ENCODE measurements at regions of chr5 and their contacts with region 1.

Region 1: DNA sequence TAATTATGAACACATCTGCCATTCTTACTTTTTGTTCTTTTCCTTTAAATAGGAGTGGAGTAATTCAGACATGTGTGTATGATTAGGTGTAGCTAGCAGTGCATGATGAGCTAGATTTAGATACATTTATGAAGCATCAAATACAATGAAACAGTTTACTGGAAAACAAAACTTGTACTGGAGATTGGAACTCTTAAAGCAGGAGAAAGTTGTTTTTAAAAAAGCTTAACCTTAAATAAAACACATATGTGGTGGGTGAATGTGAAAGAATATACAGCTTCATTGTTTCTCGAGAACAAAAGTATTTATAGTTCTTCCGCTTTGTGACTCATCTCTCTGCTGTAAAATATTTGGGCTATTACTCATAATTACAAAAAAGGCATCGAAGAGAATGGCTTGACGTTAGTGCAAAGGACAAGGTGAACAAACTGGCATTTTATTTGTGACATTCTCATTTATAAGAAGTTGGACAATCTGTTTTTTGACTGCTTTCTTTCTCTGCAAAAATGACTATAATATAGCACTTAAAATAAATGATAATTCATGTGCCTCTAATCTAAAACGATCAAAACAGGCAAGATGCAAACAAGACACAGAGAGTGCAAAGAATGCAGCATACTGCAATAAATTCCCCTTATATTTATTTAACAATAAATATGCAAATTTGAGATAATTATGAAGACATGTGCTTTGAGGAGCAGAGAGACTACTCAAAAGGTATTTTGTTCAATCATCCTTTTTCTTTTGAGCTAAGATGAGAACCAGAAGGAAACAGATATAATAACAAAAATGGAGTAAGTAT is 478.8 kb downstream of the CETN3 start:
- DNase-seq: peak; percentile 59
- ATAC-seq: peak; percentile 91
- H3K4me3 ChIP-seq: peak overlapping the region; percentile 4; the same call in 1 of the 2 replicates
- H3K27ac ChIP-seq: peak overlapping the region; percentile 70
- H3K4me1 ChIP-seq: peaks cover 12% of the 10 kb centered on the region; the same call in 1 of the 2 replicates
- H3K27me3 ChIP-seq: no peaks in the 10 kb centered on the region
- CTCF ChIP-seq: no peak
- EP300 ChIP-seq: peak; percentile 67 to 71; a peak in 2 of 4 replicates
- POLR2A ChIP-seq: no peak
- RAD21 ChIP-seq: peak; percentile 17; the same call in 1 of the 2 replicates

Region 2: GRCh38 chr5:89830691-89831090 is 100.1 kb before region 1 on chr5:
- CTCF ChIA-PET with region 1: no interaction called
- POLR2A ChIA-PET with region 1: no interaction called
- RAD21 ChIA-PET with region 1: no interaction called
- SMC1A ChIA-PET with region 1: no interaction called
- in situ Hi-C with region 1: no loop called
- intact Hi-C with region 1: no loop called
- DNase-seq: no peak
- ATAC-seq: no peak
- H3K4me3 ChIP-seq: no peak overlapping the region
- H3K27ac ChIP-seq: no peak overlapping the region
- H3K4me1 ChIP-seq: no peaks in the 10 kb centered on the region
- H3K27me3 ChIP-seq: no peaks in the 10 kb centered on the region
- CTCF ChIP-seq: no peak
- EP300 ChIP-seq: no peak
- POLR2A ChIP-seq: no peak
- RAD21 ChIP-seq: no peak

Region 3: GRCh38 chr5:89893546-89893945 is 37.2 kb before region 1 on chr5:
- CTCF ChIA-PET with region 1: no interaction called
- POLR2A ChIA-PET with region 1: no interaction called
- RAD21 ChIA-PET with region 1: no interaction called
- SMC1A ChIA-PET with region 1: no interaction called
- in situ Hi-C with region 1: no loop called
- intact Hi-C with region 1: no loop called
- DNase-seq: no peak
- ATAC-seq: no peak
- H3K4me3 ChIP-seq: no peak overlapping the region
- H3K27ac ChIP-seq: no peak overlapping the region
- H3K4me1 ChIP-seq: no peaks in the 10 kb centered on the region
- H3K27me3 ChIP-seq: no peaks in the 10 kb centered on the region
- CTCF ChIP-seq: no peak
- EP300 ChIP-seq: no peak
- POLR2A ChIP-seq: no peak
- RAD21 ChIP-seq: no peak

Region 4: GRCh38 chr5:90015584-90016018 is 84.8 kb after region 1 on chr5:
- CTCF ChIA-PET with region 1: interaction called, 3 read pairs
- POLR2A ChIA-PET with region 1: no interaction called
- RAD21 ChIA-PET with region 1: interaction called, 4 read pairs
- SMC1A ChIA-PET with region 1: interaction called, 3 read pairs
- in situ Hi-C with region 1: no loop called
- intact Hi-C with region 1: loop called (anchors 2 kb)
- DNase-seq: peak; percentile 82
- ATAC-seq: peak; percentile 96
- H3K4me3 ChIP-seq: no peak overlapping the region
- H3K27ac ChIP-seq: peak overlapping the region; percentile 7
- H3K4me1 ChIP-seq: peaks cover 28% of the 10 kb centered on the region
- H3K27me3 ChIP-seq: no peaks in the 10 kb centered on the region
- CTCF ChIP-seq: 0 out of 6 replicates have a peak, but pooled peaks of 1 of the 3 experiments have one; percentile 4
- EP300 ChIP-seq: peak; percentile 50 to 73
- POLR2A ChIP-seq: no peak
- RAD21 ChIP-seq: no peak

Measured in GM12878 (cell line).